Colonic mucosa (tissue), 4 donors: ENCODE measurements at regions of chr10 and their contacts with region 1.

Region 1: DNA sequence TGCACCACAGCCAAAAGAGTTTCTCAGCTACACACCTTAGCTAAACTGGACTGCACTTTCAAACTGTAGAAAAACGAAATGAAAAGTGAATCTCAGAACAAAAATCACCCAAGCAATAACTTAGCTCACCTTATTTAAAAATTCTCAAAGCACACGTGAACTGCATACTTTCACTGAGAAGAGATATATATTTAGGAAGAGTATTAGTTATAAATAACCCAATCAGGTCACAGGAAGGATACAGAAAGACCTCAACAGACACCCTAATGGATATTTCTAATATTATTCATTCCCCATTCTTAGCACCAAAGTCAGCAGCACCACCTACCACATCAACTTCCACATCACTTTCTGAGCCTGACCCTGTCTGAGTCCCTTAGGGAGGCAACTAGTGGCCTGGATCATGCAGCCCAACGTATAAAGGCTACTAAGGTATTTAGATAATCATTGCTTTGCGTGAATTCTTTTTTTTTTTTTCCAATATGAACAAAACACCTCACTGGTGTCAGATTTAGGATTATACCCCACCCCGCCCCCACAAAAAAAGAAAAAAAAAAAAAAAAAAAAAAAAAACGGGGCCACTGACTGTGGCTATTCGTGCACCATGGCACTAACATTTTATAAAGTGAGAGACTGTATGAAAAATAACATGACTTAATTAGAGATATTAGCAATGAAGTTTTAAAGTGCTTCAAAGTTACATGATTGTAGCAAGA is 2.6 kb downstream of the ABI1 start:
- DNase-seq: no peak
- H3K4me3 ChIP-seq: no peak overlapping the region
- H3K27ac ChIP-seq: no peak overlapping the region
- H3K4me1 ChIP-seq: peaks cover 14% of the 10 kb centered on the region
- H3K27me3 ChIP-seq: no peaks in the 10 kb centered on the region
- CTCF ChIP-seq: no peak

Region 2: GRCh38 chr10:26579256-26580077 is 278.7 kb before region 1 on chr10:
- intact Hi-C with region 1: no loop called
- DNase-seq: no peak
- H3K4me3 ChIP-seq: no peak overlapping the region
- H3K27ac ChIP-seq: no peak overlapping the region
- H3K4me1 ChIP-seq: no peaks in the 10 kb centered on the region
- H3K27me3 ChIP-seq: no peaks in the 10 kb centered on the region
- CTCF ChIP-seq: no peak

Region 3: DNA sequence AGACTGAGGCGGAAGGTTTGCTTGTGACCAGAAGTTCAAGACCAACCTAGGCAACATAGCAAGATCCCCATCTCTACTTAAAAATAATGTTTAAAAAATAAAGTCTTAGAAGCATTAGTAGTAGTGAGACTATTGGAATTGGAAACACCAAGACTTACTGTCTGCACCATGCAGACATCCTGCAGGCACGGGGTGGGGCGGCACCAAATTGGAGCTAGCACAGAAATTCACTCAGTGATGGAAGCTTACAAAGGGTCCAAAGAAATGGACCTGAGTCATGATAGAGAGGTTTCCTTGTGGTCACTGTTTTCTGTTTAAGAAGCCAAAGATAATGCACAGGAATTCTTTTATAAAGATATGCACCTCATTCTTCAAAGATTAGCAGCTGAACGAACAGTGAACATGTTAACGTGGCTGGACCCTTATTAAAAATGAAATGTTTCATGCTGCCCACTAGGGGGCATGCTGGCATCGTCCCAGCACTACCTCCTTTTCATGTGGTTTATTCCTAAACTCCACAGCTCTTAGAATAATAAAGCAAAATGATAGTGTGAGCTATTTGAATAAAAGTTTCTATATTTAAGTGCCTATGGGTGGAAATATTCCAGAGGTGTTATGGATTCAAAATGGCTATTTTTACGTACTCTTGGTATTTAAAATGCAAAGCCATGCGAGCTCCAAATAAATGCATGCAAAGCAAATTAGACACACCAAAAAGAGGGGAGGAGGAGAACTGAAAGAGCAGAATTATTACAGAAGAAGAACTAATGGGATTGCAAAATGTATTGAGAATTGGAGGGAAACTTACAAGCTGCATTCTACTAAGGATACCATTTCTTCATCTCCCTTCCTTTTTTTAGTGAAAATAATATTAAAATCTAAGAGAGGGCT is 132.1 kb before region 1 on chr10:
- intact Hi-C with region 1: loop called (anchors 5 kb)
- DNase-seq: no peak
- H3K4me3 ChIP-seq: no peak overlapping the region
- H3K27ac ChIP-seq: no peak overlapping the region
- H3K4me1 ChIP-seq: no peaks in the 10 kb centered on the region
- H3K27me3 ChIP-seq: no peaks in the 10 kb centered on the region
- CTCF ChIP-seq: peak; percentile 81

Region 4: GRCh38 chr10:27111277-27111676 is 253.1 kb after region 1 on chr10:
- intact Hi-C with region 1: no loop called
- DNase-seq: no peak
- H3K4me3 ChIP-seq: no peak overlapping the region
- H3K27ac ChIP-seq: no peak overlapping the region
- H3K4me1 ChIP-seq: no peaks in the 10 kb centered on the region
- H3K27me3 ChIP-seq: no peaks in the 10 kb centered on the region
- CTCF ChIP-seq: no peak